ENCODE measurements at regions of chr15 and their contacts with region 1.

Region 1: DNA sequence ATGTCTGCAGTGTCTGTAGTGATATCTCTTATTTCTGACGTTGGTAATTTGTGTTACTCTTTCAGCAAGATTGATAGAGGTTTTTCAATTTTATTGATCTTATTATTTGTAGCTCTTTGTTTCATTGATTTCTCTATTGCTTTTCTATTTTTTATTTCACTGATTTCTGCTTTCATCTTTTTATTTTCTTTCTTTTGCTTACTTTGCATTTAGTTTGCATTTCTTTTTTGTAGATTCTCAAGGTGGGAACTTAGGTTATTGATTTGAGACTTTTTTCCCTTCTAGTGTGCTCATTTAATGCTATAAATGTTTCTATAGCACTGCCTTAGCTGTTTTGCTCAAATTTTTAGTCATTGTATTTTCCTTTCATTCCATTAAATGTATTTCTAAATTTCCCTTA is 49.5 kb upstream of the GABRG3 start:
- DNase-seq: no peak
- H3K4me3 ChIP-seq: no peak overlapping the region
- H3K27ac ChIP-seq: no peak overlapping the region
- H3K4me1 ChIP-seq: no peaks in the 10 kb centered on the region
- H3K27me3 ChIP-seq: no peaks in the 10 kb centered on the region
- CTCF ChIP-seq: no peak
- EP300 ChIP-seq: no peak
- POLR2A ChIP-seq: no peak

Region 2: DNA sequence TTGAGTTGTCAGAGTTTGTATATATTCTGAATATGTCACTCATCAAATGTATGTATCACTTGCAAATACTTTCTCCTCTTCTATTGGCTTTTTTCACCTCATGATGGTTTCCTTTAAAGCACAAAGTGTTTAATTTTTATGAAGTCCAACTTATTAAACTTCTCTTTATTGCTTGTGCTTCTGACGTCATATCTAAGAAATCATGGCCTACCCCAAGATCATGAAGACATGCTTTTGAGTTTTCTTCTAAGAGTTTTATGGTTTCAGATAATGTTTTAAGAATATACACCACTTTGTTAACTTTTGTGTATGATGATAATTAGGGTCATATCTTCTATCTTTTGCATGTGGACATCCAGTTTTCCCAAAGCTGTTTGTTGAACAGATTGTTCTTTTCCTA is 641.1 kb before region 1 on chr15:
- in situ Hi-C with region 1: no loop called
- intact Hi-C with region 1: no loop called
- DNase-seq: no peak
- H3K4me3 ChIP-seq: no peak overlapping the region
- H3K27ac ChIP-seq: no peak overlapping the region
- H3K4me1 ChIP-seq: no peaks in the 10 kb centered on the region
- H3K27me3 ChIP-seq: no peaks in the 10 kb centered on the region
- CTCF ChIP-seq: no peak
- EP300 ChIP-seq: no peak
- POLR2A ChIP-seq: no peak

Region 3: DNA sequence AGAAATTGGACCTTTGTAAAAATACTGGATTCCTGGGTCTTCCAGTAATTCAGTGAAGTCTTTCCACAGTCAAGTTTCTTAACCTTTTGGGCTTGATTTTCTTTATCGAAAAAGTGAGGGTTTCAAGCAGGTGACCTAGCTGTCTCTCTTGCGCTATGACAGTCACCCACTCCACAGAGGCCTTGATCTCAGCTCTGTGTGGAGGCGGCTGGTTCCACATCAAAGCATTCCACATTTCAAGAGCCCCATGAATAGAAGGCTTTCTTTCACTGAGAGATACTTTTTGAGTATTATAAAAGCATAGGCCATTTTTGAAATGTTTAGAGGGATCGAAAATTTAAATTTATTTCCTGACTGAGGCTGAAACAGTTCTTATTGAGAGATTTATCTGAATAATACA is 10.7 kb before region 1 on chr15:
- in situ Hi-C with region 1: no loop called
- intact Hi-C with region 1: loop called (anchors 1 kb)
- DNase-seq: no peak
- H3K4me3 ChIP-seq: no peak overlapping the region
- H3K27ac ChIP-seq: no peak overlapping the region
- H3K4me1 ChIP-seq: no peaks in the 10 kb centered on the region
- H3K27me3 ChIP-seq: no peaks in the 10 kb centered on the region
- CTCF ChIP-seq: no peak
- EP300 ChIP-seq: no peak
- POLR2A ChIP-seq: no peak

Region 4: GRCh38 chr15:27077790-27078189 is 156.4 kb after region 1 on chr15:
- in situ Hi-C with region 1: no loop called
- intact Hi-C with region 1: no loop called
- DNase-seq: no peak
- H3K4me3 ChIP-seq: no peak overlapping the region
- H3K27ac ChIP-seq: no peak overlapping the region
- H3K4me1 ChIP-seq: no peaks in the 10 kb centered on the region
- H3K27me3 ChIP-seq: no peaks in the 10 kb centered on the region
- CTCF ChIP-seq: no peak
- EP300 ChIP-seq: no peak
- POLR2A ChIP-seq: no peak

Region 5: GRCh38 chr15:28219116-28219515 is 1297.7 kb after region 1 on chr15:
- in situ Hi-C with region 1: no loop called
- intact Hi-C with region 1: no loop called
- DNase-seq: no peak
- H3K4me3 ChIP-seq: no peak overlapping the region
- H3K27ac ChIP-seq: no peak overlapping the region
- H3K4me1 ChIP-seq: no peaks in the 10 kb centered on the region
- H3K27me3 ChIP-seq: no peaks in the 10 kb centered on the region
- CTCF ChIP-seq: no peak
- EP300 ChIP-seq: no peak
- POLR2A ChIP-seq: no peak